Activated CD4-positive, alpha-beta memory T cell treated with anti-CD3 and anti-CD28 coated beads for 36 hours (primary cell): ENCODE measurements at regions of chr1 and their contacts with region 1.

Region 1: DNA sequence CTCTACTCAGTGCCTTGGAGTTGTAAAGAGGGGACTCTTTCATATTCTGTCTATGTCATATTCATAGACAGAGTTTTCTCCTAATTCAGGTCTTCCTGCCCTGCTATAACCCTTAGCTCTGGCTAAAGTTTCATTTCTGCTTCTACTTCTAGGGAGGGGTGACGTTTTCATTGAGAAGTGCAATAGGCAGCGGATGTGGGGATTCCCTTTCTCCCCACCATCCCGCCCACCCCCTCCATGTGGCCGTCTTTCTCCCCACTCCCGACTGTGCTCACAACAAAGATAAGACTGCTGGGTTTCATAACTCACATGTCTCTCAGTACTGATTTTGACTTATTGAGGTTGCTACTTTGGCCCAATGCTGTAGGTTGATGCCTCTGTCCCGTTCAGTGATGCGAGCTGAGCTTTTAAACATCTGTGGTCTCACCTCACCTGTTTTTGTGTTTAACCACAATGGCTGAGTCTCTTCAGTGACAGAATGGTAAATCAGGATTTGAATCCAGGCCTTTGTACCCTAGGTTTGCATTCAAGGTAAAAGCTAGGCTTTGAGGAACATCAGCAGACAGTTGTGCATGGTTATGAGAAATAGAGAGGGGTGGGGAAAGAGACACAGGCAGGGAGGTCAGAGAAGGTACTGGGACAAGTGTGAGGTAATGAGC is 7.8 kb upstream of the KIF14 start:
- DNase-seq: peak; percentile 85
- H3K4me3 Mint-ChIP-seq: peak overlapping the region; percentile 11
- H3K27ac Mint-ChIP-seq: peak overlapping the region; percentile 28
- H3K4me1 Mint-ChIP-seq: peaks cover 36% of the 10 kb centered on the region
- H3K27me3 Mint-ChIP-seq: no peaks in the 10 kb centered on the region

Region 2: DNA sequence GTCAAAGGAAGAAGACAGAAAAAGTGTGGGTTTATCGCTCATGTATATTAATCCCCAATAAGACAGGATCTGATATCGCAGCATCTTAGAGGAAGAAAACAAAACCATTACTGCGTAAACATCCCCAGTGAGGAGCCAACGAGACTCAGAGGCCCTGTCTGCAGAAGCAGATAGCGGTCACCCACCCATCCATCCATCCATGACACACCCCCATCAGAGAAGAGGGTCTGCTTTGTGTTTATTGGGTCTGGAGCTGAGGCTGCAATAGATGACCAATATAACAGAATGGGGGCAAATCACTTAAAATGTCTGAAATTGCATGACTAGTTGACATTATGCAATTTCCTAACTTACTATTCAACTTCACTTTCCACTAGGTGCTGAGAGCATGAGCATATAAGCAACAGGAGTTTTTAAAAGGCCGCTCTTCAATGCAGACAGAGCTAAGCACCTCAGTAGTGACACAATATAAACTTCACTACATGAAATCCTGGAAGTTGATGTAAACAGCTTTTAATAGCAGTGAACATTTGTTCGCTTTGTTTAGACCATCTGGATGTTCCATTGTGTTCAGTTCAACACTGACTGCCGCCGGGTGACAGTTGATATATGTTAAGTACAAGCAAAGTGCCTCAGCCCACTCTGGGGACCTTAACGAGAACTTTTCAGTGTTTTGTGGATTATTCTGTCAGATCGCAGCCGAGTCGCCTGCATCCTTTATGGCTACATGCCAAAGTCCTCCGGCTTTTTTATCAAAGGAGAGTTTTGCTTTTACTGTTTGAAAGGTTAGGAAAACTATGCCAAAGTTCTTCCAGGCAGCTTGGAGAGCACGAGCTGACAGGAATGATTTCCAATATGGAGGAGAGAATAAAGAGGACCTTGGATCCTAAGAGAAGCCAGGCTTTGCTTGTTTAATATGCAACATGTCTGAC is 386.0 kb before region 1 on chr1:
- CTCF ChIA-PET with region 1: no interaction called
- POLR2A ChIA-PET with region 1: no interaction called
- intact Hi-C with region 1: no loop called
- DNase-seq: no peak
- H3K4me3 Mint-ChIP-seq: no peak overlapping the region
- H3K27ac Mint-ChIP-seq: no peak overlapping the region
- H3K4me1 Mint-ChIP-seq: peaks cover 2% of the 10 kb centered on the region
- H3K27me3 Mint-ChIP-seq: peaks cover 16% of the 10 kb centered on the region

Region 3: DNA sequence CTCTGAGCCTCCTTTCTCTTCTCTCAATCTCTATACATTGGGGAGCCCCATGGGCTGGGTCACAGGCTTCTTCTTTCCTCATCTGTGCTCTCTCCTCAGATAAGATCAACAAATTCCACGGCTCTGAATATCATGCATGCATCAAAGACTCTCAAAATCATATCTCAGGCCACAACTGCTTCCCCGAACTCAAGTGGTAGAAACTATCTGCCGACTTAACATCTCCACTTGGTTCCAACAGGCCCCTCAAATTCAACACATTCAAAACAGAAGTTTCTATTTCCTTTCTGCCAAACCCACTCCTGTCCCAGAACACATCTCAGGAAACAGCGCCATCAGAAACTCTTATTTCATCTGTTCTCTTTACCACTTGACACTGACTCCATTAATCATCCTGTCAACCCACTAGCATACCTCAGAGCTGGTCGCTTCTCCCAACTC is 24.7 kb after region 1 on chr1:
- CTCF ChIA-PET with region 1: no interaction called
- POLR2A ChIA-PET with region 1: interaction called, 3 read pairs
- intact Hi-C with region 1: loop called (anchors 1 kb)
- DNase-seq: peak; percentile 12
- H3K4me3 Mint-ChIP-seq: no peak overlapping the region
- H3K27ac Mint-ChIP-seq: peak overlapping the region; percentile 15
- H3K4me1 Mint-ChIP-seq: peaks cover 26% of the 10 kb centered on the region
- H3K27me3 Mint-ChIP-seq: no peaks in the 10 kb centered on the region

Region 4: DNA sequence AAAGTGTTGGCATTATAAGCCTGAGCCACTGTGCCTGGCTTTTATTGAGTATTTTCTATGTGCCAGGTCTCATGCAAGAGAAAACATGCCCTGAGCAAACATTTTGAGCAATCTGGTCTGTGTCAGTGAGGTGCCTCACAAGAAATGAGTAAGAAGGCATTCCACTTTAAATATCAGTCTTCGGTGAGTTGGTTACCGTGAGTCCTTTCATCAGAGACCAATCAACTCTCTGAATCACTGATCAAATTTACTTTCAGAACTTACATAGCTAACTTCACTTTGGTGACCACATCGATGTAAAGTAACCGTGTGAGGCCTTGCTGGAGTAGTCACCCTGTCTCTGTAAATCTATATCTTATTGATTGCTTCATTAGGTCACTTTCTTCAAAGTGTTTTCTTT is 55.7 kb after region 1 on chr1:
- CTCF ChIA-PET with region 1: no interaction called
- POLR2A ChIA-PET with region 1: no interaction called
- intact Hi-C with region 1: no loop called
- DNase-seq: no peak
- H3K4me3 Mint-ChIP-seq: no peak overlapping the region
- H3K27ac Mint-ChIP-seq: no peak overlapping the region
- H3K4me1 Mint-ChIP-seq: no peaks in the 10 kb centered on the region
- H3K27me3 Mint-ChIP-seq: no peaks in the 10 kb centered on the region

Region 5: DNA sequence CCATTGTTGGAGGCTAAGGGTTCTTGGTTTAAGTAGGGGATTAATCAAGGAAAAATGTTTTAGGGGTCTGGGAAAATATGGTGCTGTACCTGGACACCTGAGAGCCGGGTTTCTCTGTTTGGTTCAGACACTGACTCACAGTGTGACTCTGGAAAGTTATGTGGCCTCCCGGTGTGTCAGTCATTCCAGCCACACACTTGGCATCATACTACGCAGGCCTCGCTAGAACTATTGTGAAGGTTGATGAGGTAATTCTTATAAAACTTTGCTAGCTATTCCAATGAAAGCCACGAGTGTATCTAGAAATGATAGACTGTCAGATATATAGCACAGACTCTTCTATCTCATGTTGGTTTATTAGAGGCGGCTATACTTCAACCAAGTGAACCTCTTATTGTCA is 105.6 kb after region 1 on chr1:
- CTCF ChIA-PET with region 1: no interaction called
- POLR2A ChIA-PET with region 1: interaction called, 5 read pairs
- intact Hi-C with region 1: loop called (anchors 2 kb)
- DNase-seq: peak; percentile 60
- H3K4me3 Mint-ChIP-seq: no peak overlapping the region
- H3K27ac Mint-ChIP-seq: no peak overlapping the region
- H3K4me1 Mint-ChIP-seq: peaks cover 12% of the 10 kb centered on the region
- H3K27me3 Mint-ChIP-seq: no peaks in the 10 kb centered on the region

Region 6: GRCh38 chr1:200866521-200866920 is 238.2 kb after region 1 on chr1:
- CTCF ChIA-PET with region 1: no interaction called
- POLR2A ChIA-PET with region 1: no interaction called
- intact Hi-C with region 1: loop called (anchors 5 kb)
- DNase-seq: peak; percentile 81
- H3K4me3 Mint-ChIP-seq: no peak overlapping the region
- H3K27ac Mint-ChIP-seq: no peak overlapping the region
- H3K4me1 Mint-ChIP-seq: peaks cover 66% of the 10 kb centered on the region
- H3K27me3 Mint-ChIP-seq: peaks cover 25% of the 10 kb centered on the region

Region 7: GRCh38 chr1:200890818-200891773 is 262.7 kb after region 1 on chr1:
- CTCF ChIA-PET with region 1: no interaction called
- POLR2A ChIA-PET with region 1: interaction called, 4 read pairs
- intact Hi-C with region 1: loop called (anchors 2 kb)
- DNase-seq: no peak
- H3K4me3 Mint-ChIP-seq: peak overlapping the region; percentile 27
- H3K27ac Mint-ChIP-seq: peak overlapping the region; percentile 29
- H3K4me1 Mint-ChIP-seq: peaks cover 52% of the 10 kb centered on the region
- H3K27me3 Mint-ChIP-seq: peaks cover 32% of the 10 kb centered on the region